ENCODE measurements at regions of chr14 and their contacts with region 1.

Region 1: DNA sequence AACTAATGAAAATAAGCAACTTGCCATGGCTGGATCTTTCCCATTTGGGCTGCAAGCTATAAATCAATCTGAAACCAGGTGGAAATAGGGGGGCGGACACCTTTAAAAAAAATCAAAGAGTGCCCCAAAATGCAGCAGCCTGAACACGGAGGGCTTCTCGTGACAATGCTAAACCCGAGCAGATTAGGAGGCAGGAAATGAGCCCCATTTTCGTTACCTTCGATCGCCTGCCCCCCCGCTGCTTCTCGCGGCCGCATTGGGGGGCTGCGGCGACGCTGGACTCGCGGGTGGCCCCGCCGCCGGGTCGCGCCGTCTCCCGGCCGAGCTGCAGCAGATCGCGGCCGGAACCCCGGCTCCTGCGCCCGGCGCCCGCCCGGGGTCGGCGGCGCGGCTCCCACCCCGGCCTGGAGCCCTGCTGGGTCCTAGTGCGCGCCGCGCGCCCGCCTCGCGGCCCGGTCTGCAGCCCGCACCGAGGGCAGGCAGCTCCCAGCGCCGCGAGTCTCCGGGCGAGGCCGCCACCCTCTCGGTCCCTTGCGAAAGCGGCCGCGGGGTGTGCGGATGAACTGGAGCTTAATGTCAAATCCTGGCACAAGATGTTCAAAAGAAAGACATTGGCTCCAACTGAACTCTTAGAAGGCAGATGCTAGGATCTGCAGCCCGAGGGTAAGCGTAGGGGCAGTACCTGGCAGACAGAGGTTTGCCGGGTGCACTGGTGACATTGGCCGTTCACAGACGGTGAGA is 201.9 kb upstream of the FOXN3 start:
- DNase-seq: peak; percentile 81 to 88
- ATAC-seq: peak; percentile 85 to 90 (median 88)
- H3K4me3 ChIP-seq: peak overlapping the region; percentile 80
- H3K27ac ChIP-seq: peak overlapping the region; percentile 80
- H3K4me1 ChIP-seq: peaks cover 26% of the 10 kb centered on the region
- H3K27me3 ChIP-seq: no peaks in the 10 kb centered on the region
- CTCF ChIP-seq: no peak

Region 2: GRCh38 chr14:89185919-89186855 is 432.8 kb before region 1 on chr14:
- intact Hi-C with region 1: loop called in 1 of 2 experiments (anchors 5 kb)
- DNase-seq: peak in 1 of 2 donors; percentile 69
- ATAC-seq: peak; percentile 79 to 90 (median 86)
- H3K4me3 ChIP-seq: peak overlapping the region; percentile 44
- H3K27ac ChIP-seq: peak overlapping the region; percentile 92
- H3K4me1 ChIP-seq: peaks cover 45% of the 10 kb centered on the region
- H3K27me3 ChIP-seq: no peaks in the 10 kb centered on the region
- CTCF ChIP-seq: no peak

Region 3: GRCh38 chr14:89416002-89416995 is 202.7 kb before region 1 on chr14:
- intact Hi-C with region 1: loop called (anchors 5 kb)
- DNase-seq: peak; percentile 99 to 100
- ATAC-seq: peak; percentile 86 to 91 (median 86)
- H3K4me3 ChIP-seq: peak overlapping the region; percentile 82
- H3K27ac ChIP-seq: peak overlapping the region; percentile 96
- H3K4me1 ChIP-seq: peaks cover 22% of the 10 kb centered on the region
- H3K27me3 ChIP-seq: no peaks in the 10 kb centered on the region
- CTCF ChIP-seq: no peak

Region 4: DNA sequence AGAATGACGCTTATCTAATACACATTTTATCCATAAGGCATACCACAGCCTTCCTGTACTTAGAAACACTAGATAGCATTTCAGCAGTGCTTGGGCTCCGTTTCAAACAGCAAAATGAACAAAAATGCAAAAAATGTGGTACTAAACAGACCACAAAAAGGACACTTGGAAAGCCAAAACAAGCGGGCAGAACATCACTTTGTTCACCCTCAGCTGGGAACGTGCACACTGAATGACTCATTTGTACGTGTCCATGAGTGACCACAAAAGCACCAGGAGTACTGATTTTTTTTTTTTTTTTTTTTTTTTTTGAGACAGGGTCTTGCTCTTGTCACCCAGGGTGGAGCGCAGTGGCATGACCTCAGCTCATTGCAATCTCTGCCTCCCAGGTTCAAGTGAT is 193.1 kb before region 1 on chr14:
- intact Hi-C with region 1: loop called (anchors 1 to 5 kb)
- DNase-seq: no peak
- ATAC-seq: peak in 3 of 4 donors; percentile 37 to 50 (median 38)
- H3K4me3 ChIP-seq: no peak overlapping the region
- H3K27ac ChIP-seq: no peak overlapping the region
- H3K4me1 ChIP-seq: peaks cover 41% of the 10 kb centered on the region
- H3K27me3 ChIP-seq: no peaks in the 10 kb centered on the region
- CTCF ChIP-seq: no peak

Region 5: DNA sequence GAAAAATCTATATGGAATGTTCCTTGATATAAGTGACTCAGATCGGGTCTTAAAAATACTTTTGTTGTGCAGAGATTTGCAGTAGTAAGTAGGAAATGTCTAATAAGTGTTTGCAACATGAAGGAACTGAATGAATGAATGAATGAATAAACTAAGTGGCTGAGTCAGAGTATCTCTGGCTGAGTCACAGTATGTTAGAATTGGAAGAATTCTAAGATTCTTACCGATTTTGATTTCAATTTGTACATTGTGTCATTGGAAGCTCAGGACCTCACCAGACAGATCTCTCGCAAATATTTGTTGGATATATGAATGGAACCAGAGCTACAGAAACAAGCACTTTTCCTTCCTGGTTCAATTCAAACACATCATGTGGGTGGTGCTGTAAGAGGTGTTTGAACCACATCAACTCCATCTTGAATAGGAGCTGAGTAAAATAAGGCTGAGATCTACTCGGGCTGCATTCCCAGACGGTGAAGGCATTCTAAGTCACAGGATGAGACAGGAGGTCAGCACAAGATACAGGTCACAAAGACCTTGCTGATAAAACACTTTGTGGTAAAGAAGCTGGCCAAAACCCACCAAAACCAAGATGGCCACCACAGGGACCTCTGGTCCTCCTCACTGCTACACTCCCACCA is 78.0 kb before region 1 on chr14:
- intact Hi-C with region 1: no loop called
- DNase-seq: no peak
- ATAC-seq: no peak
- H3K4me3 ChIP-seq: no peak overlapping the region
- H3K27ac ChIP-seq: no peak overlapping the region
- H3K4me1 ChIP-seq: peaks cover 11% of the 10 kb centered on the region
- H3K27me3 ChIP-seq: no peaks in the 10 kb centered on the region
- CTCF ChIP-seq: no peak

Region 6: GRCh38 chr14:89572596-89573398 is 46.2 kb before region 1 on chr14:
- intact Hi-C with region 1: loop called in 1 of 2 experiments (anchors 5 kb)
- DNase-seq: peak in 1 of 2 donors; percentile 61
- ATAC-seq: peak; percentile 80 to 95 (median 92)
- H3K4me3 ChIP-seq: peak overlapping the region; percentile 17
- H3K27ac ChIP-seq: peak overlapping the region; percentile 40
- H3K4me1 ChIP-seq: peaks cover 25% of the 10 kb centered on the region
- H3K27me3 ChIP-seq: no peaks in the 10 kb centered on the region
- CTCF ChIP-seq: no peak

Region 7: GRCh38 chr14:89589400-89590118 is 29.4 kb before region 1 on chr14:
- intact Hi-C with region 1: loop called in 1 of 2 experiments (anchors 5 kb)
- DNase-seq: no peak
- ATAC-seq: peak in 1 of 4 donors; percentile 31
- H3K4me3 ChIP-seq: no peak overlapping the region
- H3K27ac ChIP-seq: no peak overlapping the region
- H3K4me1 ChIP-seq: peaks cover 5% of the 10 kb centered on the region
- H3K27me3 ChIP-seq: no peaks in the 10 kb centered on the region
- CTCF ChIP-seq: no peak